ENCODE measurements at regions of chr3 and their contacts with region 1.

Region 1: DNA sequence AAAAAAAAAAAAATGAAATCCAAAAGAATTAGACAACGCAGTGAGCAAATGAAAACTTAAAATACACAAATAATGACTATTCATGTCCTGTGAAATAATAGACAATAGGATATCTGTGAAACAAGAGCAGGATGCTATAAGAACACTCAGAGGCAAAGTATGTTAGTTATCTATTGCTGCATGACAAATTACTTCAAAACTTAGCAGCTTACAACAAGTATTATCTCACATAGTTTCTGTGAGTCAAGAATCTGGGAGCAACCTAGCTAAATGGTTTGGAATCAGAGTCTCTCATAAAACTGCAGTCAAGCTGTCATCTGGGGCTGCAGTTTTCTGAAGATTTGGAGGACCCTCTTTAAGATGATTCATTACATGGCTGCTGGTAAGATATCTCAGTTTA is 36.5 kb upstream of the ZMAT3 start:
- DNase-seq: no peak
- ATAC-seq: no peak
- H3K4me3 Mint-ChIP-seq: no peak overlapping the region
- H3K27ac Mint-ChIP-seq: no peak overlapping the region
- H3K4me1 Mint-ChIP-seq: no peaks in the 10 kb centered on the region
- H3K27me3 Mint-ChIP-seq: peaks cover 13% of the 10 kb centered on the region
- CTCF ChIP-seq: no peak

Region 2: DNA sequence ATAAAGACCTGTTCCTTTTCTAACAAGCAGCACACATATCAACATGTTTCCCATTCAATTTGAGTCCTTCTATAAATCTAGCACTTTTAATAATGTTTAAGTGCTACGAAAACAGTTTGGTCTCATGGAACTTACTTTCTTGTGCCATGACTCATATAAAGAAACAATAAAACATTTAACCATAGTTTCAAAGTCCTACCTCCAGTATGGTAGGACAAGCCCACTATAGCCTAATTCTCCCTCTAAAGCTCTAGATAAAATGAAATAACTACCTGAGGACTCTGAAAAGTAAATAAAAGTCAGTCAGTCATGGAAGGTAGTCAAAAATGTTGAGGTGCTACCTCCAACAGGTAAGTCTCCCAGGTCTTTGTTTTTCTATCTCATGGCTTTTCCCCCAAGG is 28.1 kb after region 1 on chr3:
- CTCF ChIA-PET with region 1: no interaction called
- POLR2A ChIA-PET with region 1: no interaction called
- intact Hi-C with region 1: no loop called
- DNase-seq: no peak
- ATAC-seq: no peak
- H3K4me3 Mint-ChIP-seq: no peak overlapping the region
- H3K27ac Mint-ChIP-seq: no peak overlapping the region
- H3K4me1 Mint-ChIP-seq: peaks cover 10% of the 10 kb centered on the region
- H3K27me3 Mint-ChIP-seq: no peaks in the 10 kb centered on the region
- CTCF ChIP-seq: no peak

Region 3: GRCh38 chr3:179272385-179272784 is 164.3 kb after region 1 on chr3:
- CTCF ChIA-PET with region 1: interaction called, 4 read pairs
- POLR2A ChIA-PET with region 1: no interaction called
- intact Hi-C with region 1: loop called (anchors 1 kb)
- DNase-seq: no peak
- ATAC-seq: no peak
- H3K4me3 Mint-ChIP-seq: no peak overlapping the region
- H3K27ac Mint-ChIP-seq: no peak overlapping the region
- H3K4me1 Mint-ChIP-seq: peaks cover 18% of the 10 kb centered on the region
- H3K27me3 Mint-ChIP-seq: peaks cover 2% of the 10 kb centered on the region
- CTCF ChIP-seq: no peak